Activated T-helper 2 cell treated with anti-CD3 and anti-CD28 coated beads, Interferon-gamma antibody, Interleukin-2, Interleukin-4, amounts not matched to agents 10 μg/mL and 5 μg/mL and 100 μg/mL, durations not matched to agents 14 hours and 24 hours and 36 hours (primary cell): ENCODE measurements at regions of chr14 and their contacts with region 1.

Region 1: GRCh38 chr14:51651388-51652167 is at the start of gene FRMD6:
- DNase-seq: peak; percentile 78
- H3K4me3 Mint-ChIP-seq: peak within 1 kb of the TSS; percentile 84
- H3K27ac Mint-ChIP-seq: peak within 1 kb of the TSS; percentile 69
- H3K4me1 Mint-ChIP-seq: peaks cover 23% of the 10 kb centered on the region
- H3K27me3 Mint-ChIP-seq: peaks cover 11% of the 10 kb centered on the region
- total RNA-seq, gene FRMD6: 11.6 and 17.8 TPM in 2 replicates

Region 2: DNA sequence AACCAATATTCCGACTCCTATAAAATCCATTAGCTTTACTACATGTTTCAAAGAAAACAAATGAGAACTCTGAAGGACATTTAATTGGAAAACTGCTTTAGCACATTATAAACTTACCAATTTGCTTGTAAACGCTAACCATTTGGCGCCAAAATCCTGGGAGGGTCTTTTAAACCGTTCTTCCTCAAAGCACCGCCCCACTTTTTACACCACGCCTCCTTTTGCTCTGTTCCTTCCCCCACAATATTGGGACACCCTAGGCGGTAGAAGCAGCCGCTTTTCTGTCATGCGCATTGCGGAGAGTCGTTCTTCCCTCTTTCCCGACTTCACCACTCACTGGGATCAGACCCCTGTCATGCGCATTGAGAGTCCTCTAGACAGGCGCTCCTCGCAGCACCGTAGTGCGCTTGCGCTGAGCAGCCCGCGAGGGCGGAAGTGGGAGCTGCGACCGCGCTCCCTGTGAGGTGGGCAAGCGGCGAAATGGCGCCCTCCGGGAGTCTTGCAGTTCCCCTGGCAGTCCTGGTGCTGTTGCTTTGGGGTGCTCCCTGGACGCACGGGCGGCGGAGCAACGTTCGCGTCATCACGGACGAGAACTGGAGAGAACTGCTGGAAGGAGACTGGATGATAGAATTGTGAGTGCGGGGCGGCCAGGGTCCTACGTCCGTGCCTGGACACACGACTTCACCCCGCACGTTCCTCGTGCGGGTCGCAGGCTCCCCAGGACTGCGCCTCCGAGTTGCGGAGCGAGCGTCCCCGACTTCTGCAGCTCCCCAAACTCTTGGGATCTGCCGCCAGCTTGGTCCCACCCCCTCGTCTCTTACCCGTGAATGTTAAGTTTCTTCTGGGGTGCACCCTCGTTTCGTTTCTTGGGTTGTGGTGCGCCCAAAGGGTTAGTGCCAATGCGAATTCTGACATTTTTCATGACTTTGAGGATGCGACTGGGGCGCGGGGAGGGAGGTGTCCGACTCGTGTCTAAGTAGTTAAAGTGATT is 411.5 kb before region 1 on chr14 and contains the start of gene TMX1:
- intact Hi-C with region 1: loop called (anchors 1 kb)
- DNase-seq: peak; percentile 87
- H3K4me3 Mint-ChIP-seq: no peak within 1 kb of the TSS
- H3K27ac Mint-ChIP-seq: no peak within 1 kb of the TSS
- H3K4me1 Mint-ChIP-seq: peaks cover 25% of the 10 kb centered on the region
- H3K27me3 Mint-ChIP-seq: no peaks in the 10 kb centered on the region
- total RNA-seq, gene TMX1: 55.1 and 55.2 TPM in 2 replicates

Region 3: GRCh38 chr14:51744372-51745130 is 93.0 kb after region 1 on chr14:
- intact Hi-C with region 1: loop called (anchors 5 kb)
- DNase-seq: no peak
- H3K4me3 Mint-ChIP-seq: no peak overlapping the region
- H3K27ac Mint-ChIP-seq: no peak overlapping the region
- H3K4me1 Mint-ChIP-seq: no peaks in the 10 kb centered on the region
- H3K27me3 Mint-ChIP-seq: no peaks in the 10 kb centered on the region

Region 4: GRCh38 chr14:51865953-51866747 is 214.6 kb after region 1 on chr14:
- intact Hi-C with region 1: loop called (anchors 5 kb)
- DNase-seq: no peak
- H3K4me3 Mint-ChIP-seq: no peak overlapping the region
- H3K27ac Mint-ChIP-seq: no peak overlapping the region
- H3K4me1 Mint-ChIP-seq: peaks cover 35% of the 10 kb centered on the region
- H3K27me3 Mint-ChIP-seq: no peaks in the 10 kb centered on the region